AG04449 (cell line): ENCODE measurements at regions of chr4 and their contacts with region 1.

Region 1: DNA sequence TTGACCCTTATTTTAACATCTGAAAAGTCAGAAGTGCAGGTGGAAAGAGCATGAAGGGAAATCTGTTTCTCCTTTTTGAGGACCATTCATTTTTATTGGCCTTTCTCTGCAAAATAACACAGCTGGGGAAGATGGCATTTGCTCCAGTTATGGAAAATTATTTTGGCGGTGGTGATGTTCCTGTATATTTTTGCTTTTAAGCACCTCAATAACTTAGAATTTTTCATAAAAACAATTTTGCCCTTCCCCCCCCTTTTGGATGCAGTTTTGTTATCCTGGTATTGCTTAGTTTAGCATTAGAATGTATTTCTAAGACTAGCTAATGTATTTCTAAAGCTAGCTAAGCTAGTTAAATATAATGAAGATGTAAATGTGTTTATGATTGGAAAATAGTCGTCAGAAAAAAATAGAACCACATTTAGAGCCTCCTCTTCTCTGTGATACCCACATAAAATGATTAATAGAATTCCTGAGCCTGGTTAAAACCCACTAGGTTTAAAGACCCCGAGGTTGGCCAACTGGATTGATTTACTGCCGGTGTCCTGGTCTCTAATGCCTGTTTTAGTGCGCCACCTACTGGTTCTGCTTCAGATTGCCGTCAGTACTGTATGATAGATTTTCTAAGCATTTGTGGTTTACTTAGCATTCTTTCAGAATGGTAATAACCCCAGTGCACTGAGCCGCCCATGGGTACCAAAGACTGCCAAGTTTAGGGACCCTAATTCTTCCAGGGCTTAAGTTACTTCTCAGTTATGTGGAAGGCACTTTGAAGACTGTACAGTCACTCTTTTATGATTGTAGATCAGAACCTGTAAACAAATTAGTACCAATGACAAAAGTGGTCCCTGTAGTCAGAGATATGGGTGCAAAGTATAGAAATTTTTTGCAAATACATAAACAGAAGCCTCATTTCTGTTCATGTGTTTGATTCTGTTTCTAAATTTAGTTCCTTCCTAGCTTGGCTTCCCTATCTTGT is 11.4 kb downstream of the KLF3 start:
- DNase-seq: peak; percentile 34
- H3K4me3 ChIP-seq: no peak overlapping the region
- CTCF ChIP-seq: peak; percentile 75

Region 2: DNA sequence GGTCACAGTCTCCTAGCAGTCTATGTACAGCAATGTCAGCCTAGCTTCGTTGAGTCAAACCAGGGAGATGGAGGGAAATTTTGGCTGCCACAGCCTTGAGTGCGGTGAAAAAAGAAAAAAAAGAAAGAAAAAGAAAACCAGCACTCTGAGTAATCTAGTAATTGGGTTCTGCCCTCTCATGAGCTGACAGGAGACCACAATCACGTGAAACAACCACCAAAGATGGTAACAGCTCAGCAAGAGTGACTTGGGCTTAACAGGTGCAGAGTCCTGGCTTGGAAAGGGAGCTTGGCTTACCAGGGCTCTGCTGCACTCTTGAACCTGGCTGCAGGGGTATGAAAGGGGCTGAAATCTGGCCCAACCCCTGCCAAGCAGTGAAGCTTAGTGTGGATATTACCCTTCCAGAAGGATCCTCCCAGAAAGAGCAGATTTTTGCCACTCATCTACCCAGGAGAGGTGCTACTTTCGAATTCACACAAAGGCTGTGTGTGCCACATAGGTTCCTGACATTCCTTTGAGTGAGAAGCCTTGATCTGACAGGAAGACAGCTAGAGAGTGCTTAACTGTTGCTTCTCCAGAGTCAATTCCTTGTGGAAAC is 364.9 kb before region 1 on chr4:
- CTCF ChIA-PET with region 1: interaction called, 21 read pairs
- POLR2A ChIA-PET with region 1: no interaction called
- DNase-seq: no peak
- H3K4me3 ChIP-seq: no peak overlapping the region
- CTCF ChIP-seq: no peak

Region 3: DNA sequence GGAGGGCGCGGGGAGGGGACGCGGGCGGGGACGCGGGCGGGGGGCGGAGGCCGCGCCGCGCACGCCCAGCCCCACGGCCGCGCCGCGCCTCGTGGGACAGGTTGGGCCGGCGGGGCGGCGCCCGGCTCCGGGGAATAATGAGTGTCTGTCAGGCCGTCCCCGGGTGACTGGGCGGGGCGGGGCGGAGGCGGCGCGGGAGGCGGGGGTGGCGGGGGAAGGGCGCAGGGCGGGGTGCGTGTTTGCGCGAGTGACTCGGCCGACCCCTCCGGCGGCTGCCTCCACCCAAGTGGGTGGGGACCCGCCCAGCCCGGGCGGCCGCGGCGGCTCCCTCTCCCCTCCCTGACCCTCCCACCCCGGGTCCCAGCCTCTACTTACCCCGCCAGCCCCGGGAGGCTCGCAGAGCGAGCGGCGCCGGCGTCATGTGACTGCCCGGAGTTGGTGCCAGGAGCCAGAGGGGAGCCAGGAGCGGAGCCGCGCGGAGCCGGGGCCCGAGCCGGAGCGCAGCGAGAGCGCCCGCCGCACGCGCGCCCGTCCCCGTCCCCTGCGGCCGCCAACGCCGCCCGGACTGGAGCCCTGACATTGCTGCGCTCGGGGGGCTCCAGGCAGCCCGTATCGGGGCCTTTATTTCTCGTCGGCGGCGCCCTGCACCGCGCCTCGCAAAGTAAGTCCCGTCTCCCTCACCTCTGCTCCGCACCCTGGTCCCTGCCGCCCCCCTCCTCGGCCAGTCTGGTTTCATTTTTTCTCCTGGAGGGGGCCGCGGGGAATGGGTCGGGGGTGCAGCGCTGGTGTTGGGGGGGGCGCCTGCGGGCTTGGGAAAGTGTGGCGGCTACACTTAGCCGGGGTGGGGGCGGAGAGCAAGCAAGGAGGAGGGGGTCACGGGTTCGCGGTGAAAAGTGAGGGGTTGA is 11.4 kb before region 1 on chr4 and contains the start of gene KLF3:
- CTCF ChIA-PET with region 1: interaction called, 33 read pairs
- POLR2A ChIA-PET with region 1: no interaction called
- DNase-seq: peak; percentile 24
- H3K4me3 ChIP-seq: peak within 1 kb of the TSS; percentile 72
- CTCF ChIP-seq: no peak

Region 4: DNA sequence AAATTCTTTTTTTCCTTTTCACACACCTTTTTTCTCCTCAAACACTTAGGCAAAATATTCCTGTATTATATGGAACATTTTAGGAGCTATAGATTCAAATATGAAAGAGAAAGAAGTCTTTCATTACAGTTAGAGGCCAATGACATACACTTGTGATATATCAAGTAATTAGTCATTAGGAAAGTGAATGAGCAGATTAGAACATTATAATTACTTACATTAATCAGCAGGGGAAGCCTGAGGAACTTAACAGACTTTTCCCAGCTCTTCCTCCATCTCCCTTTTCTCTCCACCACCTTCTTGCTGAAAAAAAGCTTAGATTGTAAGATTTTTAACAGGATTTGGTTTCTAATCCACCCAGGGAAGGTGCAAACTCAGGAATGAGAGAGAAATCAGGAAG is 18.1 kb after region 1 on chr4:
- CTCF ChIA-PET with region 1: interaction called, 13 read pairs
- POLR2A ChIA-PET with region 1: interaction called, 4 read pairs
- DNase-seq: no peak
- H3K4me3 ChIP-seq: no peak overlapping the region
- CTCF ChIP-seq: no peak

Region 5: GRCh38 chr4:38782452-38783108 is 107.1 kb after region 1 on chr4 and contains the start of gene TLR10:
- CTCF ChIA-PET with region 1: no interaction called
- POLR2A ChIA-PET with region 1: no interaction called
- DNase-seq: no peak
- H3K4me3 ChIP-seq: no peak within 1 kb of the TSS
- CTCF ChIP-seq: peak; percentile 47